Activated CD4-positive, alpha-beta T cell treated with anti-CD3 and anti-CD28 coated beads for 36 hours (primary cell): ENCODE measurements at regions of chr12 and their contacts with region 1.

Region 1: GRCh38 chr12:5745265-5745888 is 199.7 kb downstream of the ANO2 start:
- DNase-seq: peak; percentile 83
- ATAC-seq: peak; percentile 87
- H3K4me3 Mint-ChIP-seq: no peak overlapping the region
- H3K27ac Mint-ChIP-seq: no peak overlapping the region
- H3K4me1 Mint-ChIP-seq: peaks cover 19% of the 10 kb centered on the region
- H3K27me3 Mint-ChIP-seq: peaks cover 4% of the 10 kb centered on the region

Region 2: DNA sequence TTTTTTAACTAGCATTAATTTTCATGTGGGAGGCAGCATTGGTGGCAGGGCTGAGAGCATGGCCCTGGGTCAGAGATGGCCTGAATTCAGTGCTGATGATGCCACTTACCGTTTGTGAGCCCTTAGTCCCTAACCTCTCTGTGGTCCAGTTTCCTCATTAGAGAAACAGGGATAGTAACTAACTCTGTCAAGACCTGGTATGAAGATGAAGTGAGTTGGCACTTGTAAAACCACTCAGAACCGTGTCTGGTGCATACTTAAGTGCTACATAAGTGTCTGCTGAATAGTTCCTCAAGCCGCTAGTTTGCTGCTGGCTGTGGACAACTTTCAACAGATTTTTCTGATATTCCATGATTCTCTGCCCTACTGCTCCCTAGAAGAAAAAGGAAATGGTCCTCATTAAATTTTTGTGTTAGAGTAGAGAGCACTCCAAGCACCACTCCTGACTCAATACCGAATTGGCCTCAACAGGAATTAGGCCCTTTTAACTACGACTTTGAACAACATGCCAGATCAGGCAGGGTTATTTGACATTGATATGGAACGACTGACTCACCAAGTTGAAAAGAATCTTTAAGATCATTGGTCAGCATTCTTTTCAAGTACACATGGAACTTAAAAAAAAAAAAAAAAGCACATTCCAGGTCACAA is 50.5 kb before region 1 on chr12:
- CTCF ChIA-PET with region 1: no interaction called
- POLR2A ChIA-PET with region 1: no interaction called
- intact Hi-C with region 1: no loop called
- DNase-seq: no peak
- ATAC-seq: no peak
- H3K4me3 Mint-ChIP-seq: no peak overlapping the region
- H3K27ac Mint-ChIP-seq: no peak overlapping the region
- H3K4me1 Mint-ChIP-seq: no peaks in the 10 kb centered on the region
- H3K27me3 Mint-ChIP-seq: peaks cover 2% of the 10 kb centered on the region

Region 3: DNA sequence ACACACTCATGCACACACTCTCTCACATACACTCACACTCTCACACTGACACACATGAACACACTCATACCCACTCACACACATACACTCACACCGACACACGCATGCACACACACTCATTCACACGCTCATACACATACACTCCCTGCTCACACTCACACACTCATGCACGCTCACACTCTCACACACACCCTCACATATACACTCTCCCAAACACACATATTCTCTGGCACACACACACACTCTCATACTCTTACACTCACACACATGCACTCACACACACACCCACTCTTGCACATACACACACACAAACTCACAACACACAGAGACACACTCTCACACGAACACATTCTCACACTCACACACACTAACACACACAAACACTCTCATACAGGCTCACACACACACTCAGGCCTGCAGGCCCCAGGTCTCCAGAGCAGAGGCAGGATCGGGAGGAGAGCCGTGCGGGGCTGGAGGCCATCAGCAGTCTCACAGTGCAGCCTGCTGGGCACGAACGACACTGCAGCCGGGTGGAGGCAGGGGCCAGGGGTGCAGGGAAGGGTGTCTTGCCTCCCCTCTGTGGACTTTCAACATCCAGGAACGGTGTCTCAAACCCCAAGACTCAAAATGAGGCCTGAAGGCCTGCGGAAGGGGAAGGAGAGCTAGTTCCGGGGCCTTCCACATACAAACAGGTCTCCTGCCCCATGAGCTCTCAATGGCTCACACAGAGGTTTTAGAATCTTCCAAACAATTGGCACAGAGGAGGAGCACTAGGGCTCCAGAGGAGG is 51.0 kb after region 1 on chr12:
- CTCF ChIA-PET with region 1: interaction called, 9 read pairs
- POLR2A ChIA-PET with region 1: no interaction called
- intact Hi-C with region 1: loop called in 1 of 2 experiments (anchors 1 kb)
- DNase-seq: peak; percentile 64
- ATAC-seq: peak; percentile 57
- H3K4me3 Mint-ChIP-seq: no peak overlapping the region
- H3K27ac Mint-ChIP-seq: no peak overlapping the region
- H3K4me1 Mint-ChIP-seq: no peaks in the 10 kb centered on the region
- H3K27me3 Mint-ChIP-seq: peaks cover 3% of the 10 kb centered on the region